ENCODE measurements at regions of chr14 and their contacts with region 1.

Region 1: DNA sequence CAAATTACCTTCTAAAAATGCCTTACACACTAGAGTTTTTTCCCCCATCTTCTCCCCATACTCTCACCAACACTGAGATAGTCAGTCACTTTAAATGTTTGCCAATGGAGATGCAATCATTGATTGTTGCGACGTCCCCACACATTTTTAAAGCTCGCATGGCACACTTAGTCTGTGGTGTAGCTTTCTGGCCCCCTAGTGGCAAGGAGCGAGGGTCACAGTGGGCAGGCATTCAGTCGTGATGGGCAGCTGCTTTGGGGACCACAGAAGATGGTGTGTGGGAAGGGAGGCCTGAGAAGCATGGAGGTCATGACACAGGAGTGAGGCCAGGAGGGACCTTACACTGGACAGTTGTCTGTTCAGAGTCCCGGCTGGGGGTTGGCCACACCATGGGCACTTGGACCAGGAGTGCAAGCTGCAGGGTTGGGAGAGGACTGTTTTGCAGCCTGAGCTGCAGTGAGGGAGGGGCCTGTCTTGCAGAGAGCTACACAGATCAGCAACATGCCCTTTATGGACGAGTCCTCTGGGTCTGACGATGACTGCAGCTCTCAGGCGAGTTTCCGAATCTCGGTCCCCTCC is 28.7 kb downstream of the PIGH start:
- DNase-seq: peak; percentile 68 to 77
- H3K4me3 ChIP-seq: no peak overlapping the region
- H3K4me3 Mint-ChIP-seq: no peak overlapping the region
- H3K27ac Mint-ChIP-seq: no peak overlapping the region
- H3K4me1 ChIP-seq: 0 out of 2 replicates have a peak, but pooled peaks cover 4% of the 10 kb centered on the region
- H3K4me1 Mint-ChIP-seq: peaks cover 14% of the 10 kb centered on the region
- H3K27me3 ChIP-seq: no peaks in the 10 kb centered on the region
- H3K27me3 Mint-ChIP-seq: no peaks in the 10 kb centered on the region
- CTCF ChIP-seq: peak; percentile 84 to 88

Region 2: GRCh38 chr14:67514650-67515385 is 56.5 kb before region 1 on chr14:
- CTCF ChIA-PET with region 1: interaction called, 12 read pairs
- POLR2A ChIA-PET with region 1: no interaction called
- intact Hi-C with region 1: no loop called
- DNase-seq: peak in 1 of 2 experiments; percentile 34
- H3K4me3 ChIP-seq: peak overlapping the region; percentile 52
- H3K4me3 Mint-ChIP-seq: peak overlapping the region; percentile 71
- H3K27ac Mint-ChIP-seq: no peak overlapping the region
- H3K4me1 ChIP-seq: peaks cover 4% of the 10 kb centered on the region; the same call in 1 of the 2 replicates
- H3K4me1 Mint-ChIP-seq: no peaks in the 10 kb centered on the region
- H3K27me3 ChIP-seq: no peaks in the 10 kb centered on the region
- H3K27me3 Mint-ChIP-seq: peaks cover 13% of the 10 kb centered on the region
- CTCF ChIP-seq: no peak

Region 3: DNA sequence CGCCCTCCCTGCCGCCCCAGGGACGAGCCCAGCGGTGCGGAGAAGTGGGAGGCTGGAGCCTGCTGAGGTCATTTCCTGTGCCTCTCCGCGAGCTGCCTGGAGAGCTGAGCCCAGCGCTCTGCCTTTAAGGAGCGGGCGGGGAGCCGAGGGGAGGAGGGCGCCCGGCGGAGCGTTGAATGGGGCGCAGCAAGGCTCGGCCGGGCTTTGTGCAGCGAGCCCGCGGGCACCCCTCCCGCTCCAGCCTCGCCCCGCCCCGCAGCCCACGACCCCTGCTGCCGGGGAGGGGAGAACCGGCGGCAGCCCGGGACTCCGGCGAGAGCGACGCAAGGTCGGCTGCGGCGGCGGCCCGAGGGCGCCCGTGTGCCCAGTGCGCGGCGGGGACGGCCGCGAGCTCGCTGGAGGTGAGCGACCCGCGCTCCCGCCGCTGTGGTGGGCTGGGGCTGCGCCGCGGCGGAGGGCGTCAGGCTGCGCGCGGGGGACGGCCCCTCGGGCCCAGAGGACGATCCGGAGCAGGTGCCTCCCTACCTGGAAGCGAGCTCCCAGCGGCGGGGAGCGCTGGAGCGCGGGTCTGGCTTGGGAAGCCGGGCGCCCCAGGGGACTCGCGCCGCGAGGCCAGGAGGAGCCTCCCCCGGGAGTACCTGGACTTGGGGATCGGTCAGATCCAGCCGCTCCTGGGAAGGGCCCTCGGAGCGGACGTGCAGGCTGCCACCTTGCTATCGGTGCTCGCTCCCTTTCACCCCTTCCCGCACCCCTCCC is 38.2 kb before region 1 on chr14 and contains the start of gene PLEKHH1:
- CTCF ChIA-PET with region 1: interaction called, 18 read pairs
- POLR2A ChIA-PET with region 1: no interaction called
- intact Hi-C with region 1: no loop called
- DNase-seq: peak; percentile 84 to 86
- H3K4me3 ChIP-seq: peak within 1 kb of the TSS; percentile 87
- H3K4me3 Mint-ChIP-seq: peak within 1 kb of the TSS; percentile 79
- H3K27ac Mint-ChIP-seq: no peak within 1 kb of the TSS
- H3K4me1 ChIP-seq: peaks cover 8% of the 10 kb centered on the region
- H3K4me1 Mint-ChIP-seq: no peaks in the 10 kb centered on the region
- H3K27me3 ChIP-seq: no peaks in the 10 kb centered on the region
- H3K27me3 Mint-ChIP-seq: no peaks in the 10 kb centered on the region
- CTCF ChIP-seq: no peak
- total RNA-seq, gene PLEKHH1: 32.4 and 41.2 TPM in 2 replicates

Region 4: GRCh38 chr14:67541448-67542387 is 29.6 kb before region 1 on chr14:
- CTCF ChIA-PET with region 1: interaction called, 18 read pairs
- POLR2A ChIA-PET with region 1: interaction called, 5 read pairs
- intact Hi-C with region 1: no loop called
- DNase-seq: peak; percentile 83 to 91
- H3K4me3 ChIP-seq: peak overlapping the region; percentile 37
- H3K4me3 Mint-ChIP-seq: peak overlapping the region; percentile 84
- H3K27ac Mint-ChIP-seq: peak overlapping the region; percentile 95
- H3K4me1 ChIP-seq: peaks cover 7% of the 10 kb centered on the region; the same call in 1 of the 2 replicates
- H3K4me1 Mint-ChIP-seq: peaks cover 7% of the 10 kb centered on the region
- H3K27me3 ChIP-seq: no peaks in the 10 kb centered on the region
- H3K27me3 Mint-ChIP-seq: no peaks in the 10 kb centered on the region
- CTCF ChIP-seq: no peak

Region 5: GRCh38 chr14:67557126-67557525 is 14.2 kb before region 1 on chr14:
- CTCF ChIA-PET with region 1: interaction called, 15 read pairs
- POLR2A ChIA-PET with region 1: interaction called, 3 read pairs
- intact Hi-C with region 1: no loop called
- DNase-seq: peak; percentile 51 to 80
- H3K4me3 ChIP-seq: no peak overlapping the region
- H3K4me3 Mint-ChIP-seq: no peak overlapping the region
- H3K27ac Mint-ChIP-seq: peak overlapping the region; percentile 74
- H3K4me1 ChIP-seq: peaks cover 17% of the 10 kb centered on the region
- H3K4me1 Mint-ChIP-seq: peaks cover 8% of the 10 kb centered on the region
- H3K27me3 ChIP-seq: no peaks in the 10 kb centered on the region
- H3K27me3 Mint-ChIP-seq: no peaks in the 10 kb centered on the region
- CTCF ChIP-seq: no peak

Region 6: GRCh38 chr14:67583711-67584644 is 12.6 kb after region 1 on chr14:
- CTCF ChIA-PET with region 1: interaction called, 11 read pairs
- POLR2A ChIA-PET with region 1: no interaction called
- intact Hi-C with region 1: no loop called
- DNase-seq: peak; percentile 62 to 73
- H3K4me3 ChIP-seq: no peak overlapping the region
- H3K4me3 Mint-ChIP-seq: no peak overlapping the region
- H3K27ac Mint-ChIP-seq: no peak overlapping the region
- H3K4me1 ChIP-seq: peaks cover 13% of the 10 kb centered on the region
- H3K4me1 Mint-ChIP-seq: no peaks in the 10 kb centered on the region
- H3K27me3 ChIP-seq: no peaks in the 10 kb centered on the region
- H3K27me3 Mint-ChIP-seq: no peaks in the 10 kb centered on the region
- CTCF ChIP-seq: peak; percentile 78 to 82